Activated CD4-positive, alpha-beta memory T cell treated with anti-CD3 and anti-CD28 coated beads, Interleukin-2, amount 10 ng/mL, durations not matched to agents 7 days and 5 days (primary cell): ENCODE measurements at regions of chr12 and their contacts with region 1.

Region 1: DNA sequence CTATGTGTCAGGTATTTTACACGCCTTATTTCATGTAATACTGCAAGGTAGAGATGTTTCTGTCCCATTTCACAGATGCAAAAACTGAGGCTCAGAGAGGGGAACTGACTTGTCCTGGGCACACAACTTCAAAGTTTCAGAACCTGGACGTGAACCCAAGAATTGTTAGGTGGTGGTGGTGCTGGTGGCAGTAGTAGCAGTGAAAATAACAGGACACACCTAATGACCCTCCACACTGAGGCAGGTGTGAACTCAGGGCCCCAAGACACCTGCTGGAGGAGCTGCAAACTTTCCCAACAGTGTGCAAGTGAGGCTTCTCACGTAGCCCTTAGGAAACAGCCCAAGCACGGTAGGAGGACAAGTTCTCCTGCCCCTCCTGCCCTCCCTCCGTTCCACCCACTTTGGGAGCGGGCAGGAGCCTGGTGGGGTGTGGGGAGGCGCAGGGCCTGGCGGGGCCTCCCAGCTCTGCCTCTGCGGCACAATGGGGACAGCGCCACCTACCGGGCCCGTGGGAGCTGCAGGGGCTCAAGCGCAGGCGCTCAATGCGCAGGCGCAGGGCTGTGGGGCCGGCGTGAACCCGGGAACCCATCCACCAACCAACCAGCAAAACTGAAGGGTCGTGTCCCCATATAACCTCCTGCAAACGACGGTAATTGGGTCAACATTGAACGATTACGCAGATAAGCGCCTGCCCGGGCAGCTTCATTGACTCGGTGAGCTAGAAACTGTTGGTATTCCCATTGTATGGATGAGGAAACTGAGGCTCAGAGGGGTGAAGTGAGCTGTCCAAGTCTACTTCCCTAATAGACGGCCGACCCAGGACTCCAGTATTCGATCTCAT is 12.0 kb upstream of the TRPV4 start:
- DNase-seq: peak; percentile 89
- H3K4me3 Mint-ChIP-seq: peak overlapping the region; percentile 53
- H3K27ac Mint-ChIP-seq: no peak overlapping the region
- H3K4me1 Mint-ChIP-seq: peaks cover 10% of the 10 kb centered on the region
- H3K27me3 Mint-ChIP-seq: no peaks in the 10 kb centered on the region

Region 2: DNA sequence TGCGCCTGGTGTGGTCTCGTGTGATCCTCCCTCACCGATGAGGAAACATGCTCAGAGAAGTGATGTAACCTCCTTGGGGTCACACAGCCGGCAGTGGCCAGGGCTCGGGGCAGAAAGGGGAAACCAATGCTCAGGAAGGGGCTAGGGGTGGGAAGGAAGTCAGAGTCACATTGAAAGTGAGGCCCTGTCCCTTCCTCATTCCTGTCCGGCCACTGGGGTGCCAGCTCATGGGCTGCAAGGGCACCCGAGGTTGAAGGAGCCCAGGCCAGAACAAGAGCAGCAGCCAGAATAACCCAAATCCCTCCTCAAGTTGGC is 17.0 kb before region 1 on chr12:
- CTCF ChIA-PET with region 1: interaction called, 17 read pairs
- POLR2A ChIA-PET with region 1: no interaction called
- DNase-seq: no peak
- H3K4me3 Mint-ChIP-seq: no peak overlapping the region
- H3K27ac Mint-ChIP-seq: no peak overlapping the region
- H3K4me1 Mint-ChIP-seq: peaks cover 7% of the 10 kb centered on the region
- H3K27me3 Mint-ChIP-seq: peaks cover 24% of the 10 kb centered on the region

Region 3: GRCh38 chr12:109863847-109864712 is 18.9 kb after region 1 on chr12:
- CTCF ChIA-PET with region 1: interaction called, 45 read pairs
- POLR2A ChIA-PET with region 1: no interaction called
- DNase-seq: no peak
- H3K4me3 Mint-ChIP-seq: no peak overlapping the region
- H3K27ac Mint-ChIP-seq: peak overlapping the region; percentile 64
- H3K4me1 Mint-ChIP-seq: peaks cover 26% of the 10 kb centered on the region
- H3K27me3 Mint-ChIP-seq: no peaks in the 10 kb centered on the region

Region 4: GRCh38 chr12:109880016-109880931 is 35.1 kb after region 1 on chr12 and contains the start of gene GLTP:
- CTCF ChIA-PET with region 1: interaction called, 14 read pairs
- POLR2A ChIA-PET with region 1: interaction called, 3 read pairs
- DNase-seq: peak; percentile 91
- H3K4me3 Mint-ChIP-seq: peak within 1 kb of the TSS; percentile 97
- H3K27ac Mint-ChIP-seq: peak within 1 kb of the TSS; percentile 76
- H3K4me1 Mint-ChIP-seq: peaks cover 62% of the 10 kb centered on the region
- H3K27me3 Mint-ChIP-seq: peaks cover 11% of the 10 kb centered on the region
- total RNA-seq, gene GLTP: 22.2 to 23.8 TPM

Region 5: DNA sequence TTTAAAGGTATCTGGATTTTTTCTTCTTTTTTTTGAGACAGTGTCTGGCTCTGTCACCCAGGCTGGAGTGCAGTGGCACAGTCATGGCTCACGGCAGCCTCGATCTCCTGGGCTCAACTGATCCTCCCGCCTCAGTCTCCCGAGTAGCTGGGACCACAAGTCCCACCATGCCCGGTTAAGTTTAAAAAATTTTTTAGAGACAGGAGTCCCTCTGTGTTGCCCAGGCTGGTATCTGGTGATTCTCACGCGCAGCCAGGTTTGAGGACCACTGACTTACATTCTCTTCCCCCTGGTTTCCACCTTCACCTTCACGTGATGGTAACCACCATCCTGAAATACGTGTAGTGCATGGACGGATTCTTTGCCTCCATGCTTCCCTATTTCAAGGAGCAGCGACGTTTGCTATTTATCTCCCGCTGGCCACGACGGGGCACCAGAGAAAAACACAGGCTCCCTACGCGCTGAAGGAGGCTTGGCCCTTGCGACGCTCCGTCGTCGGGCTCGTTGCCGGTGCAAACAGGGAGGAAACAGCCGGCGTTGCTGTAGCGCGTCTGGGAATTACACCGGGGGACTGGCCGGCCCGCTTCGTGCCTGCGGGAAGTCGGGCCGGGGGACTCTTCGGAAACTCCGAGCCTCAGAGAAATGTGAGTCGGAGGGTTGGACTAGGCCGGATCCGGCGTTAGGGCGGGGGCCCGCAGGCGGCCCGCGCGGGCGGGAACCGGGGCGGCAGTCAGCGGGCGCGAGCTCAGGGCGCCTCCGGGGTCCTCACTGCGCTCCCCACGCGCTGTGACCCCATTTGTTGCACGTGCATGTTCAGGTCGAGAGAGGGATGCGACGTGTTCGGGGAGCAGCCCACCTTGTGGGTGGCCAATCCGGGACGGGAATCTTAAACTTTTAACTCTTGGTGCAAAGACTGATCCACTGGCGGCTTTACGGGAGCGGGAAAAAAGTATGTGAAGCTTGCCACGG is 54.9 kb after region 1 on chr12 and contains the start of gene TCHP:
- CTCF ChIA-PET with region 1: interaction called, 13 read pairs
- POLR2A ChIA-PET with region 1: interaction called, 7 read pairs
- DNase-seq: peak; percentile 82
- H3K4me3 Mint-ChIP-seq: peak within 1 kb of the TSS; percentile 84
- H3K27ac Mint-ChIP-seq: peak within 1 kb of the TSS; percentile 94
- H3K4me1 Mint-ChIP-seq: peaks cover 31% of the 10 kb centered on the region
- H3K27me3 Mint-ChIP-seq: no peaks in the 10 kb centered on the region
- total RNA-seq, gene TCHP: 35.0 to 35.3 TPM

Region 6: DNA sequence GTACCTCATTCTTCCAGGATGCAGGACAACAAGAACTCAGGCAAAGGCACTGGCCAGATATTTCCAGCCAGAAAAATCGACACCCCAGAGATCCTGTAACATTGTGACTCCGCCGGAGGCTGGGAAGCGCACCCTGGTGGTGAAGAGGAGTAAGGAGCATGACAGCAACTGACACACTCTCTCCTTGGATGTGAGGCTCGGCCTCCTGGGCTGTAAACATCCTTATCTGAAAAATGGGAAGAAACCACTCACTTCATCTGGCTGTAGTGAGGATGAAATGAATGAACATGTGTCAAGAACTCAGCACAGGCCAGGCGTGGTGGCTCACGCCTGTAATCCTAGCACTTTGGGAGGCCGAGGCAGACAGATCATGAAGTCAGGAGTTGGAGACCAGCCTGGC is 82.4 kb after region 1 on chr12:
- CTCF ChIA-PET with region 1: interaction called, 12 read pairs
- POLR2A ChIA-PET with region 1: no interaction called
- DNase-seq: peak; percentile 51
- H3K4me3 Mint-ChIP-seq: no peak overlapping the region
- H3K27ac Mint-ChIP-seq: no peak overlapping the region
- H3K4me1 Mint-ChIP-seq: no peaks in the 10 kb centered on the region
- H3K27me3 Mint-ChIP-seq: no peaks in the 10 kb centered on the region

Region 7: GRCh38 chr12:110234755-110235154 is 389.6 kb after region 1 on chr12:
- CTCF ChIA-PET with region 1: no interaction called
- POLR2A ChIA-PET with region 1: no interaction called
- DNase-seq: no peak
- H3K4me3 Mint-ChIP-seq: no peak overlapping the region
- H3K27ac Mint-ChIP-seq: no peak overlapping the region
- H3K4me1 Mint-ChIP-seq: no peaks in the 10 kb centered on the region
- H3K27me3 Mint-ChIP-seq: peaks cover 14% of the 10 kb centered on the region